ENCODE measurements at regions of chr16 and their contacts with region 1.

Region 1: DNA sequence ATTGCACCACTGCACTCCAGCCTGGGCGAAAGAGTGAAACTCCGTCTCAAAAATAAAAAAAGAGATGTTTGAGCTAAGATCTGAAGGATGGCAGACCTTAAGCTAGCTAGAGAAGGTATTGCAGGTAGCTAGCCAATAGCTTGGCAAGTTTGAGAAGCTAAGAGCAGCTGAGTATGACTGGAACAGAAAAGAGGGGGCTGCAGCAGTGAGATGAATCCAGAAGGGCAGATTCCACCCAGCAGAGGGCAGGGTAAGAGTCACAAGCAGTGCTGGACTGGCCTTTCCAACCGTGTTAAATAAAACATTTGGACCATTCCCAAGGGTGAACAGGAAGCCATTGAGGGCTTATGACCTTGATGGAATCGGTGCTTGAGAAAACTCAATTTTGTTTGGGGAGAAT is 5.7 kb upstream of the PHAF1 start:
- DNase-seq: no peak
- ATAC-seq: no peak
- H3K4me3 Mint-ChIP-seq: no peak overlapping the region
- H3K27ac Mint-ChIP-seq: no peak overlapping the region
- H3K4me1 Mint-ChIP-seq: peaks cover 6% of the 10 kb centered on the region
- H3K27me3 Mint-ChIP-seq: no peaks in the 10 kb centered on the region

Region 2: DNA sequence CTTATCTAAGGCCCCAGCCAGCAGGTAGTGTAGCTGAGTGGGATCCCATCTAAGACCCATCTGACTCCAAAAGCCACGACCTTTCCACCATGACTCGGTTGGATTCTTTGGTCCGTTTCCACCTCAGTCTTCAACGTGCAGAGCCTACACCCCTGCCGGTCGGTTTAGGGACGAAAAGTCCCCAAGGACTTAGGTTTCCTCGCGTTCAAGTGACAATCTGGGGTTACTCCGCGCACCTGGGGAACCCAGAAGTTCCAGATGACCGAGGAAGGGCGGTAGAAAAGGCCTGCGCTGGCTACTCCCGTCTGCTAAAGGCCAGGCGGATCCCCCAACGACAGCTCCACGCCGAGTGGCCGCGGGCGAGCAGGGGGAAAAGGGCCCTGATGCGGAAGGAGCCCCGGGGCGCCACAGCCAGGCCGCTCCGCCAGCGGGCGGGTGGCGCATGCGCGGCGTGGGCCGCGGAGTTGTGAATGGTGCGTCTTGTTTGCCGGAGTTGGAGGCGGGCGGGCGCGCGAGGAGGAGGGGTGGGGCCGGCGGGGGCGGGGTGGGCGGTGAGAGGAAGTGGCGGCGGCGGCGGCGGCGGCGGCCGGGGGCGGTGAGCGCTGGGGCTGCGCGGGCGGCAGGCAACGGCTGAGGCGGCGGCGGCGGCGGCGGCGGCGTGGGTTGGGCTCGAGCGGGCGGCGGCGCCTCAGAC is 75.4 kb before region 1 on chr16 and contains the start of gene CBFB:
- CTCF ChIA-PET with region 1: interaction called, 13 read pairs
- DNase-seq: peak; percentile 95
- ATAC-seq: peak; percentile 94
- H3K4me3 Mint-ChIP-seq: peak within 1 kb of the TSS; percentile 92
- H3K27ac Mint-ChIP-seq: peak within 1 kb of the TSS; percentile 94
- H3K4me1 Mint-ChIP-seq: peaks cover 48% of the 10 kb centered on the region
- H3K27me3 Mint-ChIP-seq: no peaks in the 10 kb centered on the region
- total RNA-seq, gene CBFB: 180 to 196 TPM

Region 3: DNA sequence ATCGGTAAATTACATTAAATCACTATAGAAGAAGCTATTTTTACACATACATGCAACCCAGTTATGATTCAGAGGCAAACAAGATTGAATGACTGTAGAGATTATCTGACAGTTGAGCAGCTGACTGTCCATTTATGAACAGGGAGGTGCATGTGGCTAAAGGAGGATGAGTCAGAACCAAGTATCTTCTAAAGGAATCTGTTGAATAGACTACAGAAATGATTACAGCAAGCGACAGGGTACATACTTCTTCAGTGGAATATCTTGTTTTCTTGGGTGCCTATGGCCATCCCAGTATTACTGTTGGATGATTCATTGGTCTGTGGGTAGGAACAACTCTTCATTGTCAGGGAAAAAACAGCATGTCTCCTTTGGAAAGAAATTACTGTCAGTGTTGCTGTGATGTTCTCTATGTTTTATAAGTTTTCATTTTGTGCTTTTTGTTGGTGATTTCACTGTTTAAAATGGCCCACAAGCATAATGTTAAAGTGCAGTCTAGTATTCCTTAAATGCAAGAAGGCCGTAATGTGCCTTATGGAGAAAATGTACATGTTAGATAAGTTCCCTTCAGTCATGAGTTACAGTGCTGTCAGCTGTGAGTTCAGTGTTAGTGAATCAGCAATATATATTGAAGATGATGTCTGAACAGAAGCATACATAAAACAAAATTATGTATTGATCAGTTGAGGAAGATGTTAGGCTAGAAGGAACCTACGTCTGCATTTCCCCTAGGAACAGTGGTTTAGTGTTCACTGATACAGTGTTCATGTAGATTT is 48.2 kb before region 1 on chr16:
- CTCF ChIA-PET with region 1: interaction called, 12 read pairs
- DNase-seq: peak; percentile 49
- ATAC-seq: peak; percentile 73
- H3K4me3 Mint-ChIP-seq: peak overlapping the region; percentile 48
- H3K27ac Mint-ChIP-seq: peak overlapping the region; percentile 82
- H3K4me1 Mint-ChIP-seq: peaks cover 61% of the 10 kb centered on the region
- H3K27me3 Mint-ChIP-seq: no peaks in the 10 kb centered on the region